ENCODE measurements at regions of chr2 and their contacts with region 1.

Region 1: GRCh38 chr2:39266139-39266805 is 22.5 kb upstream of the CDKL4 start:
- DNase-seq: peak in 1 of 14 experiments; percentile 9
- ATAC-seq: no peak
- H3K4me3 ChIP-seq: no peak overlapping the region
- H3K4me3 Mint-ChIP-seq: no peak overlapping the region
- H3K27ac ChIP-seq: no peak overlapping the region
- H3K27ac Mint-ChIP-seq: no peak overlapping the region
- H3K4me1 ChIP-seq: no peaks in the 10 kb centered on the region
- H3K4me1 Mint-ChIP-seq: peaks cover 9% of the 10 kb centered on the region
- H3K27me3 ChIP-seq: no peaks in the 10 kb centered on the region
- H3K27me3 Mint-ChIP-seq: no peaks in the 10 kb centered on the region
- CTCF ChIP-seq: no peak

Region 2: DNA sequence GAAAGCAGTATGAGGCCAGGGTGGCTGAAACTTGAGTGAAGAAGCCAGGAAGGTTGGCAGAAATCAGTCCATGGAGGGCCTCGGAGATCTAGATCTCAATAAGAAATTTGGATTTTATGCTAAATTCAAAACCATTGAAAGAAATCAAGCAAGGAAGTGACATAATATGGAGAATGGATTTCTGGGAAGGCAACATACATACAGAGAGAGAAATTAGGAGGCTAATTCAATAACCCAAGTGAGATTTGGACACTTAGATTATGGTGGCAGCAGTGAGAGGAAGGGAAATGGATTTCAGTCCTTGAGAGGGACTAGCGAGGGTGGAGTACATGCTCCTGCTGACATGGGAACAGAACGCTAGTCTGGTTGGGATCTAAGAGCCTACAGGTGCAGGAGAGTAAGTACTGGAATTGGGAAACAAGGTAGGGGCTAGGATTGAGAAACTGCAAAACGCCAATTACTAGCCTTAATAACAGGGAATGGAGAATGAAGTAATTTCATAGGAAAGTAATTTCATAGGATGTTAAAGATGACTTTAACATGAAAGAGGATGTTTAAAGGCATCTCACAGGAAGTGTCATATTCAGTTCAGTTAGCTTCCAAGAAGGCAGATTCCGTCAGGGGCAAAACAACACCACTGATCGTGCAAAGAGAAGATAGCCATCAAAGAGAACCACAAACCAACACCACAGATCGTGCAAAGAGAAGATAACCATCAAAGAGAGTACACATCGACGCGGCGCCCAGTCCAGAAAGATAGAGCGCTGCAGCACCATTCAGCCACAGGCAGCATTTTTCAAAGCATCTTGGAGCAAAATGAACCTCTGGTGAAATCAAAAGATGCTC is 49.7 kb before region 1 on chr2:
- CTCF ChIA-PET with region 1: no interaction called
- POLR2A ChIA-PET with region 1: no interaction called
- intact Hi-C with region 1: loop called in 1 of 2 experiments (anchors 1 kb)
- DNase-seq: peak; percentile 51 to 94 (median 66)
- ATAC-seq: peak; percentile 86
- H3K4me3 ChIP-seq: no peak overlapping the region
- H3K4me3 Mint-ChIP-seq: peak overlapping the region; percentile 64
- H3K27ac ChIP-seq: peak overlapping the region; percentile 49 to 69
- H3K27ac Mint-ChIP-seq: peak overlapping the region; percentile 59
- H3K4me1 ChIP-seq: peaks cover 43% of the 10 kb centered on the region
- H3K4me1 Mint-ChIP-seq: peaks cover 33% of the 10 kb centered on the region
- H3K27me3 ChIP-seq: no peaks in the 10 kb centered on the region
- H3K27me3 Mint-ChIP-seq: no peaks in the 10 kb centered on the region
- CTCF ChIP-seq: no peak

Measured in CD4-positive, alpha-beta T cell (primary cell).